Prostate gland (tissue), 2 donors: ENCODE measurements at regions of chr13 and their contacts with region 1.

Region 1: GRCh38 chr13:20495082-20496023 is 30.3 kb downstream of the CRYL1 start:
- DNase-seq: peak; percentile 67
- H3K4me3 ChIP-seq: no peak overlapping the region
- H3K27ac ChIP-seq: no peak overlapping the region
- H3K4me1 ChIP-seq: no peaks in the 10 kb centered on the region
- H3K27me3 ChIP-seq: no peaks in the 10 kb centered on the region
- CTCF ChIP-seq: peak; percentile 81 to 91 (median 88)
- POLR2A ChIP-seq: no peak

Region 2: DNA sequence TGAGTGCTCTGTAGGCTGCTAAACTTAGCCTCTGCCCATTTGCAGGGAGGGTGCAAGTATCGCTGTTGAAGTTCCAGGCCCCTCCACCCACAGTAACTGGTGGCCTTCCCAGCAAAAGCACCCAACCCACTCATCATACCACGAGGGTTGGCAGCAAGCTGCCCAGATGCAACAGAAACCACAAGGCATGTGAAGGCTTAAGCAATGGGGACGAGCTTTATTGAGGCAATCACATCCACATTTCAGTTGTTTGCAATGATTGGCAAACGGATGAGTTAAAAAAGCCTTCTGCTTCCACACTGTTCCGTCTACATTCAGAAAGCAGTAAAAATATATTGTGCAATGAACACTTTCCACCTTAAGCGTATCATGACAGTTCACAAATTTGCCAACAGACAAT is 273.6 kb before region 1 on chr13:
- intact Hi-C with region 1: no loop called
- DNase-seq: no peak
- H3K4me3 ChIP-seq: no peak overlapping the region
- H3K27ac ChIP-seq: no peak overlapping the region
- H3K4me1 ChIP-seq: no peaks in the 10 kb centered on the region
- H3K27me3 ChIP-seq: no peaks in the 10 kb centered on the region
- CTCF ChIP-seq: no peak
- POLR2A ChIP-seq: no peak

Region 3: GRCh38 chr13:20633802-20634201 is 138.4 kb after region 1 on chr13:
- intact Hi-C with region 1: no loop called
- DNase-seq: no peak
- H3K4me3 ChIP-seq: no peak overlapping the region
- H3K27ac ChIP-seq: no peak overlapping the region
- H3K4me1 ChIP-seq: no peaks in the 10 kb centered on the region
- H3K27me3 ChIP-seq: no peaks in the 10 kb centered on the region
- CTCF ChIP-seq: no peak
- POLR2A ChIP-seq: no peak

Region 4: GRCh38 chr13:20828539-20829364 is 333.4 kb after region 1 on chr13:
- intact Hi-C with region 1: loop called (anchors 5 kb)
- DNase-seq: no peak
- H3K4me3 ChIP-seq: no peak overlapping the region
- H3K27ac ChIP-seq: no peak overlapping the region
- H3K4me1 ChIP-seq: no peaks in the 10 kb centered on the region
- H3K27me3 ChIP-seq: no peaks in the 10 kb centered on the region
- CTCF ChIP-seq: peak; percentile 34 to 75 (median 68)
- POLR2A ChIP-seq: no peak

Region 5: GRCh38 chr13:20924758-20925394 is 429.5 kb after region 1 on chr13:
- intact Hi-C with region 1: loop called (anchors 2 kb)
- DNase-seq: peak; percentile 77
- H3K4me3 ChIP-seq: no peak overlapping the region
- H3K27ac ChIP-seq: no peak overlapping the region
- H3K4me1 ChIP-seq: no peaks in the 10 kb centered on the region
- H3K27me3 ChIP-seq: no peaks in the 10 kb centered on the region
- CTCF ChIP-seq: peak; percentile 22 to 63 (median 57)
- POLR2A ChIP-seq: no peak